RWPE1 (cell line): ENCODE measurements at regions of chr5 and their contacts with region 1.

Region 1: GRCh38 chr5:108260117-108260857 is 121.6 kb downstream of the FBXL17 start:
- DNase-seq: peak; percentile 81
- H3K27ac ChIP-seq: no peak overlapping the region
- CTCF ChIP-seq: peak; percentile 98

Region 2: DNA sequence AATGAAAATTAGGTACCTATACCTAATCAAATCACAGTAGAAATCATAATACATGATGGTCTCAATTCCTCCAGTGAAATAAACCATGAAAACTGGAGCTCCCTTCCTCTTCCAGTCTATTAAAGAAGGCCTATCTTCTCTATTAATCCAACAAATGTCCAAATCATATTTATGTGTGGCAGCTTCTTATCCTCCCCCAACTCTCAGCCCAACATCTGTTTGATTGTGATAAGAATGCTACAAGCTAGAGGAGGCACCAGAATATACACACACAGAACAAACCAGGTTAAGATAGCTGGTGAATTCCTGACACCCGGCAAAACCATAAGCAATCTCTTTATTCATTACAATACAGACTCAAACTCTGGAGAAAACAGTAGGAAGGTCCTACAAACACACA is 10.8 kb after region 1 on chr5:
- CTCF ChIA-PET with region 1: interaction called, 15 read pairs
- POLR2A ChIA-PET with region 1: no interaction called
- DNase-seq: no peak
- H3K27ac ChIP-seq: no peak overlapping the region
- CTCF ChIP-seq: no peak

Region 3: DNA sequence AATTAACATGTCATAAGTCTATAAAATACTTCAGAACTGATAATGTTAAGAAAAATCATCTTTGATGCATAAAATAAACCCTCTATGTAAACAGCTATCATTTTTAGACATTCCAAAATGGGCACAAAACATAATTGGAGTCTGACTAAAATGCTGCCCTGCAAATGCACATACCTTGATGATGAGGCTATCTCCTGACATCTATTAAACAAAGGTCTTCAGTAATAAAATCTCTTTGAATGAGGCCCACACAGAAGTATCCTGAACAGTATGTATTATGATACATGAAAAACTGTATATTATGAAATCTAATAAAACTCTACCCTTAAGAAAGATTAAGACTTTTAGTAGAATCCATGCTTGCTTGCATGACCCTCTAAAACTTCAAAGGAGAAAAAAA is 55.5 kb after region 1 on chr5:
- CTCF ChIA-PET with region 1: interaction called, 14 read pairs
- POLR2A ChIA-PET with region 1: no interaction called
- DNase-seq: no peak
- H3K27ac ChIP-seq: no peak overlapping the region
- CTCF ChIP-seq: no peak

Region 4: GRCh38 chr5:108345541-108346171 is 85.4 kb after region 1 on chr5:
- CTCF ChIA-PET with region 1: interaction called, 40 read pairs
- POLR2A ChIA-PET with region 1: no interaction called
- DNase-seq: peak; percentile 26
- H3K27ac ChIP-seq: no peak overlapping the region
- CTCF ChIP-seq: peak; percentile 58

Region 5: DNA sequence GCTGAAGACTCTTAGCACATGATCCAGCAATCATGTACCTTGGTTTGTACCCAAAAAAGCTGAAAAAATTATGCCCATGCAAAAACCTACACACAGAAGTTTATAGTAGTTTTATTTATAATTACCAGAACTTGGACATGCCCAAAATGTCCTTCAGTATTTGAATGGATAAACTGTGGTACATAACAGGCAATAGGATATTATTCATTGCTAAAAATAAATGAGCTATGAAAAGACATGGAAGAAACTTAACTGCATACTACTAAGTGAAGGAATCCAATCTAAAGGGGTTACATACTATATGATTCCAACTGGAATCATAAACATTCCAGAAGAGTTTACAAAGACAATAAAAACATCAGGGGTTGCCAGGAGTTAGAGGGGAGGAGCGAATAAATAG is 96.0 kb after region 1 on chr5:
- CTCF ChIA-PET with region 1: interaction called, 10 read pairs
- POLR2A ChIA-PET with region 1: no interaction called
- DNase-seq: no peak
- H3K27ac ChIP-seq: no peak overlapping the region
- CTCF ChIP-seq: no peak